Activated CD4-positive, alpha-beta T cell treated with anti-CD3 and anti-CD28 coated beads for 36 hours (primary cell): ENCODE measurements at regions of chr20 and their contacts with region 1.

Region 1: DNA sequence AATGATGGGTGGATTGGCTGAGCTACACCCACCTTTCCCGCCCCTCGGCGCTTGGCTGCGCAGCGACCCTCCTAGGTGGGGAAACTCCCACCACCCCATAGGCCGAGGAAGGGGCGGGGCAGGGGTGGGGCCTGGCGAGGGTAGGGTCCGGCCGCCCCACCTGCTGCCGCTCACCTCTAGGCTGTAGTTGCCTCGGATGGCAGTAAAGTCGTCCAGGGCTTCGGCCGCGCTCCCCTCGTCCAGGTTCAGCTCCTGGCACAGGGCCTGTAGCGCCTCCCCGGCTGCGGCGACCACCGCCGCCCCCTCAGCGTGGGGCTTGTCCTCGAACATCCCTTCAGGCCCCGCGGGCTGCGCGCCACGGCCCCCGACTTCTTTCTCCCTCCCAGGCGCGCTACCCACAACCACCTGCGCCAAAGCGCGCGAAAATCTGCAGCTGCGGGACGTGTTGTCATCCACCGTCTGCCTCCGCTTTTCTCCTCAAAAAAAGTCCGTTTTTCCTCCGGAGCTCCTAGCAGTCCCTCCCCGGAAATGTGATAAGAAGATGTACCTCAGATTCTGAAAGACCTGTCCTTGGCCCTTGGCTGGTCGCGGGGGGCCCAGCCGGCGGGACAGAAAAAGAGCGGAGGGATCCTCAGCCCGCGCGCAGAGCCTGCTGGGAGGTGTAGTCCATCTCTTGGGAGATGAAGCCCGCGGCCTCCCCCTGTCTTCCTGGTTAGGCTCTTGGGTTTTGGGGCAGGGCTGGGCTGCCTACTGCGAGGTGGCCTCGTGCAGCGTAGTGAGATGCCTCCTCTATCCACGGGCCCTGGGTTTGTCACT is at the start of gene RBL1:
- DNase-seq: peak; percentile 94
- ATAC-seq: peak; percentile 83
- H3K4me3 Mint-ChIP-seq: peak within 1 kb of the TSS; percentile 95
- H3K27ac Mint-ChIP-seq: peak within 1 kb of the TSS; percentile 100
- H3K4me1 Mint-ChIP-seq: peaks cover 26% of the 10 kb centered on the region
- H3K27me3 Mint-ChIP-seq: no peaks in the 10 kb centered on the region
- total RNA-seq, gene RBL1: 39.5 to 43.2 TPM

Region 2: GRCh38 chr20:36745927-36746659 is 349.7 kb before region 1 on chr20 and contains the start of gene NDRG3:
- CTCF ChIA-PET with region 1: no interaction called
- POLR2A ChIA-PET with region 1: no interaction called
- intact Hi-C with region 1: no loop called
- DNase-seq: peak; percentile 96
- ATAC-seq: peak; percentile 99
- H3K4me3 Mint-ChIP-seq: peak within 1 kb of the TSS; percentile 81
- H3K27ac Mint-ChIP-seq: peak within 1 kb of the TSS; percentile 87
- H3K4me1 Mint-ChIP-seq: peaks cover 20% of the 10 kb centered on the region
- H3K27me3 Mint-ChIP-seq: no peaks in the 10 kb centered on the region
- total RNA-seq, gene NDRG3: 24.8 to 27.5 TPM

Region 3: DNA sequence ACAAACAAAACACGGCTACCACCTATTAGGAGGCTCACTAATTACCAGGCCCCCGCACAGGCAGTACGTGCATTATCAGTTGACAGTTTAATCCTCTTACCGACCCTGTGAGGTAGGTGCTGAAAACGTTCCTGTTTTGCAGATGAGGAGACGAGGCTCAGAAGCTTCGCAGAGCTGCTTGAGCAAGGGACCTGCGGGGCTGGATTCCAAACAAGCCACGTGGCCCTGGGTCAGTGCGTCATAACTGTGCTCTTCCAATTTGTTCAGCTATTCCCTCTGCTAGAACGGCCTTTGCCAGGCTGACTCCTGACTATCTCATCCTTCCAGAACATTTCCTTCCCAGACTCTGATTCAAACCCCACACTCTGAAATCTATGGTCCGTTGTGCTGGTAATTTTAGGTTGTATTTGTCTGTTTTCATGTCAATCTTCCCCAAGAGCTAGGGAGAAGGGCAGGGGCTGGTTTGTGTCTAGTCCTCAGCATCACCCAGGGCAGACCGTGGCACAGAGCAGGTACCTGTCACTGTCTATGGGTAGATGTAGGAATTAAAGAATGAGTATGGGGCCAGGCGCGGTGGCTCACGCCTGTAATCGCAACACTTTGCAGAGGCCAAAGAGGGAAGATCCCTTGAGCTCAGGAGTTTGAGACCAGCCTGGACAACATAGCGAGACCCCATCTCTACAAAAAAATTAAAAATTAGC is 248.6 kb before region 1 on chr20:
- CTCF ChIA-PET with region 1: no interaction called
- POLR2A ChIA-PET with region 1: no interaction called
- intact Hi-C with region 1: no loop called
- DNase-seq: no peak
- ATAC-seq: no peak
- H3K4me3 Mint-ChIP-seq: no peak overlapping the region
- H3K27ac Mint-ChIP-seq: no peak overlapping the region
- H3K4me1 Mint-ChIP-seq: peaks cover 8% of the 10 kb centered on the region
- H3K27me3 Mint-ChIP-seq: no peaks in the 10 kb centered on the region

Region 4: GRCh38 chr20:36951198-36951976 is 144.4 kb before region 1 on chr20 and contains the start of gene SAMHD1:
- CTCF ChIA-PET with region 1: no interaction called
- POLR2A ChIA-PET with region 1: no interaction called
- intact Hi-C with region 1: loop called in 1 of 2 experiments (anchors 2 kb)
- DNase-seq: peak; percentile 94
- ATAC-seq: peak; percentile 95
- H3K4me3 Mint-ChIP-seq: peak within 1 kb of the TSS; percentile 92
- H3K27ac Mint-ChIP-seq: peak within 1 kb of the TSS; percentile 94
- H3K4me1 Mint-ChIP-seq: peaks cover 49% of the 10 kb centered on the region
- H3K27me3 Mint-ChIP-seq: no peaks in the 10 kb centered on the region
- total RNA-seq, gene SAMHD1: 35.6 to 36.9 TPM

Region 5: DNA sequence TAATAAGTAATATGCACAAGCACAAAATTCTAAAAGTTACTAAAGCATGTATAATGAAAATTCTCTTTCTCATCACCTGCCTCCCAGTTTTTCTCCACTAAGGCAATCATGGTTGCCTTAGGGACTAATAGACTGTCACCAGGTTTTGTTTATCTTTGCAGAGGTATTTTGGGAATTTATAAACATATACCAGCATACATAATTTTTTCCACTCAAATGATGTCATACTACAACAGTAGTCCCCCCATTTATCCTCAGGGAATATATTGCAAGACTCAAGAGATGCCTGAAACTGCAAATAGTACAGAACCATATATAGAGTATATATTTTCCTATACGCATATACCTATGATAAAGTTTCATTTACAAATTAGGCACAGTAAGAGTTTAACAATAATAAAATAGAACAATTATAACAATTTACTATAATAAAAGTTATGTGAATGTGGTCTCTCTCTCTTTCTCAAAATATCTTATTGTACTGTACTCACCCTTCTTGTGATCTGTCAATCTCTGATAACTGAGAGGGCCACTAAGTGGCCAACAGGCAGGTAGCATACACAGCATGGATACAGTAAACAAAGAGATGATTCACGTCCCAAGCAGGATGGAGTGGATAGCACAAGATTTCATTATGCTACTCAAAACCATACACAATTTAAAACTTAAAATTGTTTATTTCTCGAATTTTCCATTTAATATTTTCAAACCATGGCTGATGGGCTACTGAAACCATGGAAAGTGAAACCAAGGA is 19.7 kb before region 1 on chr20:
- CTCF ChIA-PET with region 1: interaction called, 3 read pairs
- POLR2A ChIA-PET with region 1: no interaction called
- intact Hi-C with region 1: loop called in 1 of 2 experiments (anchors 2 kb)
- DNase-seq: no peak
- ATAC-seq: no peak
- H3K4me3 Mint-ChIP-seq: no peak overlapping the region
- H3K27ac Mint-ChIP-seq: no peak overlapping the region
- H3K4me1 Mint-ChIP-seq: peaks cover 46% of the 10 kb centered on the region
- H3K27me3 Mint-ChIP-seq: no peaks in the 10 kb centered on the region